Gastrocnemius medialis (tissue), 4 donors: ENCODE measurements at regions of chr19 and their contacts with region 1.

Region 1: DNA sequence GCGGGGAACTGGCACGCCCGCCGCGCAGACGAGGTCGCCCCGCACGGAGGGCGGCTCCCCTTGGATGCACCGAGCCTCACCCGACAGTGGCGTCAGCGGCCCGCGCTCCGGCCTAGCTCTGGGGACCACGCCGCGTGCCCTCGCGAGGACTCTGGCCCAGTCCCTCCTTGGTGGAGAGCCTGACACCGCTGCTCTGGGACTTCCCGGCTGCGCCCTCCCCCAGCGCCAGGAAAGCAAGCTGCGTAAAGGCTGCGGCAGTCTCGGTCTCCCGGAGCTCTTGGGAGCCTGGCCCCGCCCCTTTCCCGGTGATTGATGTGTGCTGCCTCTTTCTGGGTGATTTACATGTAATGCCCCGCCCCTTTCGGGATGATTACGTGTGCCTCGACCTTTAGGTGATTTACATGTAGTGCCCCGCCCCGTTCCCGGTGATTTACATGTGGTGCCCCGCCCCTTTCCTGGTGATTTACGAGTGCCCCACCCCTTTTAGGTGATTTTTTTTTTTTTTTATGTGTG is at the start of gene LENG9:
- DNase-seq: peak; percentile 97 to 98
- ATAC-seq: peak; percentile 85 to 87
- H3K4me3 ChIP-seq: peak within 1 kb of the TSS; percentile 54 to 81 (median 62)
- H3K27ac ChIP-seq: peak within 1 kb of the TSS; percentile 78 to 92 (median 84)
- H3K4me1 ChIP-seq: peaks cover 7 to 24% of the 10 kb centered on the region in 2 donors
- H3K27me3 ChIP-seq: no peaks in the 10 kb centered on the region
- CTCF ChIP-seq: no peak
- POLR2A ChIP-seq: peak; percentile 87 to 89
- total RNA-seq, gene LENG9: 1.5 to 4.9 (median 3.4) TPM

Region 2: GRCh38 chr19:53982611-53983010 is 481.0 kb before region 1 on chr19:
- in situ Hi-C with region 1: no loop called
- intact Hi-C with region 1: loop called (anchors 10 kb)
- DNase-seq: peak in 1 of 2 donors; percentile 52
- ATAC-seq: no peak
- H3K4me3 ChIP-seq: peak overlapping the region in 3 of 4 donors; percentile 6 to 40 (median 29)
- H3K27ac ChIP-seq: no peak overlapping the region
- H3K4me1 ChIP-seq: peaks cover 12 to 17% of the 10 kb centered on the region in 2 donors
- H3K27me3 ChIP-seq: peaks cover 3 to 16% (median 5%) of the 10 kb centered on the region in 3 donors
- CTCF ChIP-seq: no peak
- POLR2A ChIP-seq: no peak

Region 3: GRCh38 chr19:54115109-54116063 is 348.2 kb before region 1 on chr19 and contains the starts of genes PRPF31 and TFPT:
- in situ Hi-C with region 1: no loop called
- intact Hi-C with region 1: loop called (anchors 1 kb)
- DNase-seq: peak; percentile 94 to 95
- ATAC-seq: peak; percentile 95 to 97
- H3K4me3 ChIP-seq: peak within 1 kb of the TSS; percentile 69 to 98 (median 91)
- H3K27ac ChIP-seq: peak within 1 kb of the TSS; percentile 87 to 99 (median 90)
- H3K4me1 ChIP-seq: peaks cover 21% of the 10 kb centered on the region in 2 donors
- H3K27me3 ChIP-seq: no peaks in the 10 kb centered on the region
- CTCF ChIP-seq: peak in 1 of 5 experiments; percentile 24
- POLR2A ChIP-seq: peak; percentile 63 to 76
- total RNA-seq, gene PRPF31: 26.6 to 39.4 (median 37.2) TPM
- total RNA-seq, gene TFPT: 7.5 to 18.1 (median 17.5) TPM

Region 4: GRCh38 chr19:54159352-54160181 is 304.0 kb before region 1 on chr19 and contains the start of gene LENG1:
- in situ Hi-C with region 1: no loop called
- intact Hi-C with region 1: loop called (anchors 10 kb)
- DNase-seq: peak; percentile 100
- ATAC-seq: peak; percentile 96 to 98
- H3K4me3 ChIP-seq: peak within 1 kb of the TSS; percentile 78 to 87 (median 84)
- H3K27ac ChIP-seq: peak within 1 kb of the TSS; percentile 93 to 98 (median 96)
- H3K4me1 ChIP-seq: peaks cover 23 to 38% of the 10 kb centered on the region in 2 donors
- H3K27me3 ChIP-seq: peaks cover 3 to 8% (median 3%) of the 10 kb centered on the region in 3 donors
- CTCF ChIP-seq: peak in 4 of 5 experiments; percentile 31 to 43 (median 37)
- POLR2A ChIP-seq: peak; percentile 68 to 80
- total RNA-seq, gene LENG1: 6.5 to 14.2 (median 11.9) TPM

Region 5: DNA sequence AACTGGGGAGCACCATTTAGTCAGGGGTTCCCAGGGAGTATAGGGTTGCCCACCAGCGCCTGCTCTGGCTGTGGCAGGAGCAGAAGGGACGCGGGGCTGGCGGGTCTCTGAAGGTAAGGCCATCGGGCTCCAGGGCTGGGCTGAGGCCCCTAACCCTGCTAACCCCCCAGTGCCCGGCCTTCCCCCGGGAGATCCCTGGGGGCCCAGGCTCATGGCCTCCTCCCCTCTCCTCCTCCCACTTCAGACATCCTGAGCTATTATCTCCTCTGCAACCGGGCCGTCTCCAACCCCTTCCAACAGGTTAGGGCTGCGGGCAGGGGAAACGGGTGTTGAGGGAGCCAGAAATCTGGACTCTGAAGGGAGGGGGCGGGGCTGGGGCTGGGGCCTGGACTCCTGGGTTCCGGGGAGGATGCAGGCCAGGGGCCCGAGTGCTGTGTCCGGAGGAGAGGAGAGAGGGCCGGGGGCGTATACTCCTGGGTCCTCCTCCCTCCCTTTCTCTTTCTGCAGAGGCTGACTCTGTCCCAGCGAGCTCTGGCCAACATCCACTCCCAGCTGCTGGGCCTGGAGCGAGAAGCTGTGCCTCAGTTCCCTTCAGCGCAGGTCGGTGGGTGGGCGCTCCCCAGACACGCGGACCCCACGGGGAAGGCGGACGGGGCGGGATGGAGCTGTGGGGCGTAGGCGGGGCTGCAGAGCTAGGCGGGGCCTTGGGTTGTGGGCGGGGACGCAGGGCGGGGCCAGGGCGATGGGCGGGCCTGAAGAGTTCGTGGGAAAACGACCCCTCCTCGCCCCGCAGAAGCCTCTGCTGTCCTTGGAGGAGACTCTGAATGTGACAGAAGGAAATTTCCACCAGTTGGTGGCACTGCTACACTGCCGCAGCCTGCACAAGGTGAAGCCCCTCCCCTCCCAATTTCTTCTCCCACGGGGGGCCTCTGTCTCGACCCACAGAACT is 33.0 kb before region 1 on chr19:
- in situ Hi-C with region 1: no loop called
- intact Hi-C with region 1: no loop called
- DNase-seq: no peak
- ATAC-seq: peak; percentile 17 to 37
- H3K4me3 ChIP-seq: peak overlapping the region; percentile 25 to 40 (median 35)
- H3K27ac ChIP-seq: no peak overlapping the region
- H3K4me1 ChIP-seq: peaks cover 12 to 32% of the 10 kb centered on the region in 2 donors
- H3K27me3 ChIP-seq: peaks cover 35 to 58% (median 43%) of the 10 kb centered on the region in 3 donors
- CTCF ChIP-seq: peak in 1 of 5 experiments; percentile 26
- POLR2A ChIP-seq: no peak

Region 6: GRCh38 chr19:54448774-54449700 is 14.6 kb before region 1 on chr19 and contains the start of gene LENG8:
- in situ Hi-C with region 1: no loop called
- intact Hi-C with region 1: loop called (anchors 1 kb)
- DNase-seq: peak; percentile 97 to 98
- ATAC-seq: peak; percentile 95 to 96
- H3K4me3 ChIP-seq: peak within 1 kb of the TSS; percentile 87 to 95 (median 90)
- H3K27ac ChIP-seq: peak within 1 kb of the TSS; percentile 92 to 98 (median 93)
- H3K4me1 ChIP-seq: peaks cover 22 to 31% of the 10 kb centered on the region in 2 donors
- H3K27me3 ChIP-seq: no peaks in the 10 kb centered on the region
- CTCF ChIP-seq: no peak
- POLR2A ChIP-seq: peak; percentile 89 to 95
- total RNA-seq, gene LENG8: 9.9 to 49.5 (median 15.5) TPM

Region 7: GRCh38 chr19:55099533-55100506 is 636.2 kb after region 1 on chr19:
- in situ Hi-C with region 1: no loop called
- intact Hi-C with region 1: no loop called
- DNase-seq: no peak
- ATAC-seq: peak in 1 of 2 donors; percentile 55
- H3K4me3 ChIP-seq: no peak overlapping the region
- H3K27ac ChIP-seq: peak overlapping the region in 3 of 4 donors; percentile 55 to 66 (median 66)
- H3K4me1 ChIP-seq: peaks cover 0 to 10% of the 10 kb centered on the region in 2 donors
- H3K27me3 ChIP-seq: no peaks in the 10 kb centered on the region
- CTCF ChIP-seq: no peak
- POLR2A ChIP-seq: no peak

Region 8: GRCh38 chr19:55258828-55259539 is 795.4 kb after region 1 on chr19 and contains the start of gene PPP6R1:
- in situ Hi-C with region 1: no loop called
- intact Hi-C with region 1: loop called (anchors 10 kb)
- DNase-seq: peak; percentile 95 to 99
- ATAC-seq: peak; percentile 97 to 98
- H3K4me3 ChIP-seq: peak within 1 kb of the TSS; percentile 74 to 90 (median 80)
- H3K27ac ChIP-seq: peak within 1 kb of the TSS; percentile 89 to 97 (median 94)
- H3K4me1 ChIP-seq: peaks cover 42 to 49% of the 10 kb centered on the region in 2 donors
- H3K27me3 ChIP-seq: no peaks in the 10 kb centered on the region
- CTCF ChIP-seq: peak in 2 of 5 experiments; percentile 38 to 52
- POLR2A ChIP-seq: peak; percentile 86 to 88
- total RNA-seq, gene PPP6R1: 14.6 to 47.9 (median 39.6) TPM